Esophagus muscularis mucosa (tissue), 4 donors: ENCODE measurements at regions of chrX and their contacts with region 1.

Region 1: GRCh38 chrX:101415180-101416145 is 7.4 kb downstream of the HNRNPH2 start:
- DNase-seq: no peak
- H3K4me3 ChIP-seq: no peak overlapping the region
- H3K27ac ChIP-seq: peak overlapping the region; percentile 48 to 73 (median 64)
- H3K4me1 ChIP-seq: peaks cover 6 to 68% (median 52%) of the 10 kb centered on the region in 4 donors
- H3K27me3 ChIP-seq: no peaks in the 10 kb centered on the region
- CTCF ChIP-seq: peak; percentile 72 to 80 (median 73)
- EP300 ChIP-seq: no peak
- POLR2A ChIP-seq: no peak

Region 2: GRCh38 chrX:100883654-100884053 is 531.8 kb before region 1 on chrX:
- intact Hi-C with region 1: no loop called
- DNase-seq: no peak
- H3K4me3 ChIP-seq: no peak overlapping the region
- H3K27ac ChIP-seq: no peak overlapping the region
- H3K4me1 ChIP-seq: no peaks in the 10 kb centered on the region
- H3K27me3 ChIP-seq: no peaks in the 10 kb centered on the region
- CTCF ChIP-seq: no peak
- EP300 ChIP-seq: no peak
- POLR2A ChIP-seq: no peak

Region 3: DNA sequence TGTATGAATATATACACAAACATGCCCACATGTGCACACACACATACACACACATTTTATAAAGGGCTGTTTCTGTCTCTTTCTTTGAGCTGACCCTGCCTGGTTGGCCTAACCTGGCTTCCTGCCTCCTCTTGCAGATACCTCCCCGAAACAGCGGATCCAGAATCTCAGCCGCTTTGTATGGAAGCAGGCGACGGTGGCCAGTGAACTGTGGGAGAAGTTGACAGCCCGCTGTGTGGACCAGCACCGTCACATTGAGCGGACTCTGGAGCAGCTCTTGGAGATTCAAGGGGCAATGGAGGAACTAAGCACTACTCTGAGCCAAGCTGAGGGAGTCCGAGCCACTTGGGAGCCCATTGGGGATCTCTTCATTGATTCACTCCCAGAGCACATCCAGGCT is 173.9 kb before region 1 on chrX:
- intact Hi-C with region 1: no loop called
- DNase-seq: no peak
- H3K4me3 ChIP-seq: no peak overlapping the region
- H3K27ac ChIP-seq: no peak overlapping the region
- H3K4me1 ChIP-seq: no peaks in the 10 kb centered on the region
- H3K27me3 ChIP-seq: no peaks in the 10 kb centered on the region
- CTCF ChIP-seq: no peak
- EP300 ChIP-seq: no peak
- POLR2A ChIP-seq: no peak

Region 4: DNA sequence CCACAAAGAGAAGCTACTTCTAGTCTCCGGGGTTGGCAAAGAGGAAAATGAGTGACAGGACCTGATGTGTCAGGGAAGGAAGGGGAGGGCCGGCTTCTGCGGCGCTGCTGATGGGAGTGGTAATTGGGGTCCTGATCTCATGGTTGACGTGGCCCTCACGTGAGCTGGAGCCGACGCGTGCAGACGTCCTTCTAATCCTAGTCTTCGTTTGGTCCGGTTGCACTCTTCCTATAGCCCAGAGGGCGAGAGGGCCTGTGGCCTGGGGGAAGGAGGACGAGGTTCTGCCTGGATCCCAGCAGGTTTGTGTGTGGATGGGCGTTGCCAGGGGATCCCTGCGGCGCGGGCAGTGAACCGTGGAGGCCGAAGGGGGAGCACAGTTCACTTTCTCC is 134.9 kb after region 1 on chrX and contains the start of gene ARMCX1:
- intact Hi-C with region 1: loop called (anchors 5 kb)
- DNase-seq: peak; percentile 92
- H3K4me3 ChIP-seq: peak within 1 kb of the TSS; percentile 60 to 69 (median 64)
- H3K27ac ChIP-seq: peak within 1 kb of the TSS; percentile 84 to 89 (median 88)
- H3K4me1 ChIP-seq: peaks cover 0 to 10% (median 8%) of the 10 kb centered on the region in 4 donors
- H3K27me3 ChIP-seq: no peaks in the 10 kb centered on the region
- CTCF ChIP-seq: no peak
- EP300 ChIP-seq: no peak
- POLR2A ChIP-seq: no peak
- total RNA-seq, gene ARMCX1: 25.7 to 37.9 (median 33.7) TPM

Region 5: DNA sequence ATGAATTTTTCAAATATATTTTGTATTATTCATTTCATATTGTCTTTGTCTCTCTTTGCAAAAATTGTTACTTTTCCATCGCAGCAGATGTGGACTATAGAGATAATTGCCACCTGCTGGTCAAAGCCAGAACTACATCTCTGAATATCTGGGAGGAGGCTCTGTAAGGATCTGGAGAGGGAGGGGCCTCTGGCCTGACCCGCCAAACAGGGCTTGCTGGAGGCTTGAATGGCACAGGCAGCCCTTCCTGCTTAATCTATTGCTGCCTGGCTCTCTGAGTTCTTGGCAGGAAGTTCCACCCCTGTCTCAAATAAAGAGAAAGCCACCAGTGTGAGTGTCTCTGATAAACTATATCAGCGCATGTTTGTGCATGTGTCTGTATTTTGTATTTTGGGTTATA is 383.9 kb after region 1 on chrX:
- intact Hi-C with region 1: loop called (anchors 2 kb)
- DNase-seq: peak; percentile 92
- H3K4me3 ChIP-seq: peak overlapping the region in 2 of 4 donors; percentile 20 to 37
- H3K27ac ChIP-seq: no peak overlapping the region
- H3K4me1 ChIP-seq: no peaks in the 10 kb centered on the region
- H3K27me3 ChIP-seq: peaks cover 0 to 2% (median 0%) of the 10 kb centered on the region in 4 donors
- CTCF ChIP-seq: peak; percentile 72 to 79 (median 74)
- EP300 ChIP-seq: no peak
- POLR2A ChIP-seq: no peak